AG04449 (cell line): ENCODE measurements at regions of chr4 and their contacts with region 1.

Region 1: DNA sequence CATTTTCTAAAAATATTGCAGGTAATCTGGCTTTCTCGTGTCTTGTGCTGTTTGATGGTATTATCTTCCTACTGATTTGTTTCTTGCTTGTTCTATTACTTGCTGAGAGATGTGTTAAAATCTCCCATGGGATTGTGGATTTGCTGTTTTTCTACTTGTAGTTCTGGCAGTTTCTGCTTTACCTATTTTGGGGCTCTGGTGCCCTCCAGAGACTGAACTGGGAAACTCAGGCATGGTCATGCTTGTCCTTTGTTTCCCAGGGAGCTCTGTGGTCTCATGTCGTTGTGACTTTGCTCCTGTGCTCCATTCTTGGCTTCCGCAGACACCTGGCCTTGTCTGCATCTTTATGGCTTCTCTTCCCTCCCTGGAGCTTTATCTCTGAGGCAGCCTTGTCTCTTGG is 39.5 kb downstream of the NSD2 start:
- DNase-seq: peak; percentile 12
- H3K4me3 ChIP-seq: no peak overlapping the region
- CTCF ChIP-seq: peak; percentile 69

Region 2: GRCh38 chr4:1417522-1418390 is 492.9 kb before region 1 on chr4:
- CTCF ChIA-PET with region 1: no interaction called
- POLR2A ChIA-PET with region 1: no interaction called
- DNase-seq: no peak
- H3K4me3 ChIP-seq: no peak overlapping the region
- CTCF ChIP-seq: no peak

Region 3: GRCh38 chr4:1746265-1746691 is 164.4 kb before region 1 on chr4:
- CTCF ChIA-PET with region 1: interaction called, 59 read pairs
- POLR2A ChIA-PET with region 1: no interaction called
- DNase-seq: no peak
- H3K4me3 ChIP-seq: no peak overlapping the region
- CTCF ChIP-seq: peak; percentile 98

Region 4: GRCh38 chr4:1833307-1834046 is 77.2 kb before region 1 on chr4:
- CTCF ChIA-PET with region 1: interaction called, 11 read pairs
- POLR2A ChIA-PET with region 1: no interaction called
- DNase-seq: no peak
- H3K4me3 ChIP-seq: no peak overlapping the region
- CTCF ChIP-seq: no peak

Region 5: GRCh38 chr4:1922821-1923220 is 12.2 kb after region 1 on chr4:
- CTCF ChIA-PET with region 1: interaction called, 13 read pairs
- POLR2A ChIA-PET with region 1: interaction called, 3 read pairs
- DNase-seq: no peak
- H3K4me3 ChIP-seq: no peak overlapping the region
- CTCF ChIP-seq: no peak

Region 6: GRCh38 chr4:2071912-2072867 is 161.5 kb after region 1 on chr4:
- CTCF ChIA-PET with region 1: no interaction called
- POLR2A ChIA-PET with region 1: no interaction called
- DNase-seq: no peak
- H3K4me3 ChIP-seq: no peak overlapping the region
- CTCF ChIP-seq: no peak

Region 7: DNA sequence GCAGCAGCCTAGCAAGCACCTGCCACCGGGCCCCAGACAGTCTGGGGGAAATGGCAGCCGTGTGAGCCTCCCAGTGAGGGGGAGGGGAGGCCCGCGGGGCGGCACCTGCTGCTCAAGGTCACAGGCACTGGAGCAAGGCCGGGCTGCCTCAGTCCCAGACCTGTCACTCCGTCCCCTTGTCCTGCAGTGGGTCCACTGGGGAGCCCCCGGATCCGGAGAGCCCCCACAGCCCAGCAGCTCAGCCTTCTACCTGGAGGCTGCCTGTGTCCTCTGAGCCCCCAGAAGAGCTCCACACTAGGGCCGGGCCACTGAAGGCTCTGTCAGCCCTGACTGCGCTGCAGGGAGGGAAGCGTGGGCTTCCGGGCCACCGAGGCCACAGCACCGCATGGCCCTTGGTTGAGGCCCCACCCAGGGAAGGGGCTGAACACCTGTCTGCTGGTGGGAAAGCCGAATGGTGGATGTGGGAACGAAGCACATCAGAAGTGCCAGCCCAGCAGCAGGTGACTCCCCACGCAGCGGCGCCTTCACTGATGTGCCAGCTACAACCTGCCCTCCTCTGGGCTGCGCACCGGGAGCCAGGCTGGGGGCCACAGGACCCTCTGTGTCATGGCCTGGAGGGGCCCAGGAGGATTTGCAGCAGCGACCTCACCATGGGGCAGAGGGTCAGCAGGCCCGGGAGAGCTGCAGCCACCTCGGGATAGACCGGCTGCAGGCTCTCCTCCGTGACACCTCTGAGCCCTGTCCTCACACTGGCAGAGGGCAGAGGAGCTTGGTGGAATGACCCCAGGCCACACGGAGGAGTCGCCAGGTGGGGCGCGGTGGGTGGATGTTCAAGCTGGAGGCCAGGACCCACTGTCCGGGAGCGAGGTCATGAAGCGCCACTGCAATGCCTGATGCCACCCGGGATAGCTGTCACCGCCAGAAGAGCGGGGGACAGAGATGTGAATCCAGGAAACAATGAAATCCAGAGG is 386.3 kb after region 1 on chr4:
- CTCF ChIA-PET with region 1: no interaction called
- POLR2A ChIA-PET with region 1: no interaction called
- DNase-seq: no peak
- H3K4me3 ChIP-seq: no peak overlapping the region
- CTCF ChIP-seq: no peak